Activated CD4-positive, alpha-beta T cell treated with anti-CD3 and anti-CD28 coated beads for 36 hours (primary cell): ENCODE measurements at regions of chr2 and their contacts with region 1.

Region 1: GRCh38 chr2:189302274-189302948 is 122.8 kb upstream of the COL5A2 start:
- DNase-seq: no peak
- ATAC-seq: peak; percentile 68
- H3K4me3 Mint-ChIP-seq: no peak overlapping the region
- H3K27ac Mint-ChIP-seq: peak overlapping the region; percentile 87
- H3K4me1 Mint-ChIP-seq: peaks cover 85% of the 10 kb centered on the region
- H3K27me3 Mint-ChIP-seq: no peaks in the 10 kb centered on the region

Region 2: GRCh38 chr2:189287982-189288521 is 14.4 kb before region 1 on chr2:
- CTCF ChIA-PET with region 1: no interaction called
- POLR2A ChIA-PET with region 1: no interaction called
- intact Hi-C with region 1: loop called in 1 of 2 experiments (anchors 1 kb)
- DNase-seq: no peak
- ATAC-seq: peak; percentile 85
- H3K4me3 Mint-ChIP-seq: no peak overlapping the region
- H3K27ac Mint-ChIP-seq: peak overlapping the region; percentile 23
- H3K4me1 Mint-ChIP-seq: peaks cover 48% of the 10 kb centered on the region
- H3K27me3 Mint-ChIP-seq: no peaks in the 10 kb centered on the region

Region 3: GRCh38 chr2:189641590-189641989 is 339.2 kb after region 1 on chr2:
- CTCF ChIA-PET with region 1: no interaction called
- POLR2A ChIA-PET with region 1: no interaction called
- intact Hi-C with region 1: loop called in 1 of 2 experiments (anchors 2 kb)
- DNase-seq: peak; percentile 74
- ATAC-seq: peak; percentile 97
- H3K4me3 Mint-ChIP-seq: no peak overlapping the region
- H3K27ac Mint-ChIP-seq: peak overlapping the region; percentile 52
- H3K4me1 Mint-ChIP-seq: peaks cover 27% of the 10 kb centered on the region
- H3K27me3 Mint-ChIP-seq: no peaks in the 10 kb centered on the region

Region 4: DNA sequence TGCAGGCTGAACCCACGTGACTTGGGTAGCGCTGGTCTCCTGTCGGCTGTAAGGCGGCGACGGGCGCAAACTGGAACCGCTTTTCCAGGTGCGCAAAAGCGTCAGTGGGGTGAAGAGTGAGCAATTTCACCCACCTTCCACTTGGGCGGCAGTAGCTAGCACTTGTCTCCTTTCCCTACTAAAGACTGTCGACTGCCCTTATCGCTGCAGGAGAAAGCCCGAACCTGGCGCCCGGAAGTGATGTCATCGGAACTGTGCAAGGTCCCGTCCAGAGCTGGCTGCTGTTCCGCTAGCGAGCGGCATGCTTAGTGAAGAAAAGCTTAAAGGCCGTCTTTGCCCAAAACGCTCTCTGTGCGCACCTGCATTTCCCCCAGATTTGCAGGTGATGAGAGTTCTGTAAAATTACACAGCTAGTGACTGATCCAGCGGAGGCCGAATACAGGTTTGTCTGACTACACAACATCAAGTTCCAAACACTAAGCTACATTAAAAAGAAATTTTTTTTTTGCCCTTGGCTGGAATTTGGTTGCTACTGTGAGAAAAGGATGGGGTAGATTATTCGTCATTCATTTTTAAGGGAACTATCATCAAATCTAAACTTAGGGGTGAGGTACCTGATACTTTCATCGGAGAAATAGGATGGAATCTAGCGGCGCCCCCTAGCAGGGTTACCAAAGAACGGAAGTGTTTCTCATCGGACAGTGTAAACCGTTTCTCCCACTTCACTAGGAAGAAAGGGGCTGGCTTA is 460.3 kb after region 1 on chr2 and contains the start of gene OSGEPL1:
- CTCF ChIA-PET with region 1: no interaction called
- POLR2A ChIA-PET with region 1: no interaction called
- intact Hi-C with region 1: no loop called
- DNase-seq: peak; percentile 96
- ATAC-seq: peak; percentile 97
- H3K4me3 Mint-ChIP-seq: peak within 1 kb of the TSS; percentile 89
- H3K27ac Mint-ChIP-seq: peak within 1 kb of the TSS; percentile 96
- H3K4me1 Mint-ChIP-seq: peaks cover 15% of the 10 kb centered on the region
- H3K27me3 Mint-ChIP-seq: no peaks in the 10 kb centered on the region
- total RNA-seq, gene OSGEPL1: 9.8 to 11.6 TPM